ENCODE measurements at regions of chr14 and their contacts with region 1.

Region 1: DNA sequence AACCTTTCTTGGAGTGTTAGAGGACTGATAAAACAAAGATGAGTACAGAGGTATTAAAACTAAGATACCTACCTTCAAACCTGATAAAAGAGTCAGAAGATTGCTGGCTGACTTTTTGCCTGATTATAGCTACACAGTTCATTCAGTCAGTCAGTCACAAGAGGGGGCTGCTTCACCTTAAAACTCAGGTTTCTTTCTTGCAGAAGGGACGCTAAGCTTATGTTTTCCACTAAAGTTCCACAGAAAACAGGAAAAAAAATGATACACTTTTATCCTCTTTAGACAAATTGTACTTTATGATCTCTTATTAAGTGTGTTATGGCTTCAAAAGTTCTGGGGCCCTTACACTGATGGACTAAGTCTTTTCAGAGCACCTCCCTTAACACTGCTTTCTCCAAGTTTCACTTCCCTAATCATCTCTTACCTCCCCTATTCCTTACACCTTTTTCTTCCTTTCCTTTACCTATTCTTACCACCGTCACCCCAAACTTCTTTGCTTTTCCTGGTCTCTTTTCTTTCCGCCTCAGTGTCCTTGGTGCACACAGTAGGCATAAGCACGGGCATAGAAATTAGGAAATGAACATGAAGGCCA is 448.7 kb upstream of the OR4E1 start:
- DNase-seq: no peak
- H3K4me3 ChIP-seq: no peak overlapping the region
- H3K27ac ChIP-seq: no peak overlapping the region
- H3K4me1 ChIP-seq: no peaks in the 10 kb centered on the region
- H3K27me3 ChIP-seq: no peaks in the 10 kb centered on the region
- CTCF ChIP-seq: peak in 2 of 3 experiments; percentile 44 to 60; a peak in 3 of 4 replicates
- EP300 ChIP-seq: no peak
- POLR2A ChIP-seq: no peak
- RAD21 ChIP-seq: peak; percentile 55 to 65

Region 2: DNA sequence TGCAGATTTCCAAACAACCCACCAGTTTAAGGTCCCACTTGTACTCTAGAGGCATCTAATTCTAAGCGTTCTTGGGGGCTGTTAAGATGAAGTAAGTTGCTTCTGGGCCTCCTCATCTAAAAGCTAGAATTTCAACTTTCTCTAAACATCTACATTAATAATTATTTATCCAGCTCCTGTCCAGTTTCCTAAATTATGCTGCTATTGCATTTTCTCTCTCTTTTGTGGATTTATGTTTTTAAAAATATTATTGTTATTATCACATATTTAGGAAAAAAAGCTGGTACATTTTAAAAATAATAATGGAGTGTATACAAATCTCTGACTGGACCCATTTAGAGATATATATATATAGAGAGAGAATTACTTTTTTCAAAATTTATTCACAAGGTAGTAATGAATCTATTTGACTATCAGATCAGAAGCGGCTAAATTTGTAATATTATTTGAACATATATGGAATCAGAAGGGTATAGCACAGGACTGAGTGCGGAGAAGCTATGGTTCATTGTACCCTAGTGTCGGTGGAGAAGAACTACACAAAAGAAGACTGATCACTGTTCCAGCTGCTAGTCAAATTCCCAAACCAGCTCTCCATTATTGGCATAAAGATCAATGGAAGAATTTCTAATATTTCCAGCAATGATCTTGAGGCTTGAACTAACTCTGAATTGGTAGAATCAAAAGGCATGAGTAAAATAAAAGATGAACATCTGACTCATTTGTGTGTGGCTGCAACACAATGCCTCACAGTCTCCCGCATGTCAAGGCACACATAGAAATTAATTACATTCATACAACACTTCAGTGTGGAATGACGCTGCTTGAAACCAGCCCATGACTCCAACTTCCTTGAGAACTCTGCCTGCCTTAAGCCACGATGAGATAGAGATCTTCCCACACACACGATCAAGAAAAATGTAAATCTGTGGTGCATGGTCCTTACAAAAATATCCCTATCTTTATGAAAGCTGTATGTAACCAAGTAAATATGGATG is 15.3 kb before region 1 on chr14:
- CTCF ChIA-PET with region 1: interaction called, 12 read pairs
- POLR2A ChIA-PET with region 1: no interaction called
- DNase-seq: no peak
- H3K4me3 ChIP-seq: no peak overlapping the region
- H3K27ac ChIP-seq: no peak overlapping the region
- H3K4me1 ChIP-seq: no peaks in the 10 kb centered on the region
- H3K27me3 ChIP-seq: no peaks in the 10 kb centered on the region
- CTCF ChIP-seq: no peak
- EP300 ChIP-seq: no peak
- POLR2A ChIP-seq: no peak
- RAD21 ChIP-seq: no peak

Region 3: DNA sequence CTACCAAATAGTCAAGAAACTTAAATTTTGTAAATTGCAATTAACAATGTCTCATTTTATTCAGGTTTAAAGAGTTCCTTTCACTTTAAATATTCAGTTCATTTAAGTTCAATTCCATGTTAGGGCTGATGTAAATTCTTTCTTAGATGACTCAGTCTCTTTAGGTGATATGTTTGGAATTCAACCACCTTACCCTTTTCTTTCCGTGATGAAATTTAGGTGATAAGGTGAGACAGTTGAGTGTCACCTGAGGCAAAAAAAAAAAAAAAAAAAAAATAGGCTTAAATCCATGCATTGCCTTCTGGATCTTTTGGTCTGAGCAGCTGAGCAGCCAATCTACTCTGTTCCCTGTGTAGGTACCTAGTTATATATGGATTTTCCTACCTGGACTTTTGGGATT is 167.2 kb after region 1 on chr14:
- CTCF ChIA-PET with region 1: no interaction called
- POLR2A ChIA-PET with region 1: no interaction called
- DNase-seq: no peak
- H3K4me3 ChIP-seq: no peak overlapping the region
- H3K27ac ChIP-seq: no peak overlapping the region
- H3K4me1 ChIP-seq: no peaks in the 10 kb centered on the region
- H3K27me3 ChIP-seq: no peaks in the 10 kb centered on the region
- CTCF ChIP-seq: no peak
- EP300 ChIP-seq: no peak
- POLR2A ChIP-seq: no peak
- RAD21 ChIP-seq: no peak